Activated T-helper 1 cell treated with anti-CD3 and anti-CD28 coated beads, Interleukin-12 subunit alpha, Interleukin-12 subunit beta, Interleukin-2, Interleukin-4 antibody, amounts not matched to agents 30 ng/mL and 10 ng/mL and 1 ng/mL, durations not matched to agents 14 hours and 24 hours and 36 hours (primary cell): ENCODE measurements at regions of chr5 and their contacts with region 1.

Region 1: DNA sequence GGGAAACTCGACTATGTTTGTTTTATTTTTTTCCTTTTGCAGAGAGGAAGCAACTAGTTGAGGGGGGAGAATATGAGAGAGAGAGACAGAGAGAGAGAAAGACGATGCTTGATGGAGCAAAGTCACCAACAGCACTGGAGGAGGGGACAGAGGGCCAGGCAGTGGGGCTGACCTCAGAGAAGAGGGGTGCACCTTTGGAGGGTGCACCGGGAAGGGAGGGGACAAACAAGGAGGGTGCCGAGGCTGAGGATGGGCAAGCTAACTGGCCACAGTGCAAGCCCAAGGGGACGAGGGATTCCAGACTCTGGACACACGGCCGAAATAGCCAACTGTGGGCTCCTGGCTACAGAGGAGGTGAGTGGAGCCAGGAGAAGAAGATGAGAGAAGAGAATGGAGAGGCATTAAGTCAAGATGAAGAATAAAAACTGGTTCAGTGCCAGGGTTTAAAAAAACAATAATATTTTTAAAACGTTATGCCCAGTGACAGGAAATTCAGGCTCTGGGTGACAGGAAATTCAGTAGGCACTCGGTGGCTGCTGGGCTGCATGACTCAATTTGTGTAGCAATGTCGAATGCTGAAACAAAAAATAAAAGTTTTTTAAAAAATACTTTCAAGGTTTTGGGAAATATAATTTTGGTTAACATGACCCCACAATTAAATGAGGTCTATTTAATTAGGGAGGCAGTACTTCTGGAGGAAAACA is 13.3 kb upstream of the GLRX start:
- DNase-seq: no peak
- H3K4me3 Mint-ChIP-seq: peak overlapping the region; percentile 76
- H3K27ac Mint-ChIP-seq: peak overlapping the region; percentile 54
- H3K4me1 Mint-ChIP-seq: peaks cover 37% of the 10 kb centered on the region
- H3K27me3 Mint-ChIP-seq: peaks cover 2% of the 10 kb centered on the region

Region 2: DNA sequence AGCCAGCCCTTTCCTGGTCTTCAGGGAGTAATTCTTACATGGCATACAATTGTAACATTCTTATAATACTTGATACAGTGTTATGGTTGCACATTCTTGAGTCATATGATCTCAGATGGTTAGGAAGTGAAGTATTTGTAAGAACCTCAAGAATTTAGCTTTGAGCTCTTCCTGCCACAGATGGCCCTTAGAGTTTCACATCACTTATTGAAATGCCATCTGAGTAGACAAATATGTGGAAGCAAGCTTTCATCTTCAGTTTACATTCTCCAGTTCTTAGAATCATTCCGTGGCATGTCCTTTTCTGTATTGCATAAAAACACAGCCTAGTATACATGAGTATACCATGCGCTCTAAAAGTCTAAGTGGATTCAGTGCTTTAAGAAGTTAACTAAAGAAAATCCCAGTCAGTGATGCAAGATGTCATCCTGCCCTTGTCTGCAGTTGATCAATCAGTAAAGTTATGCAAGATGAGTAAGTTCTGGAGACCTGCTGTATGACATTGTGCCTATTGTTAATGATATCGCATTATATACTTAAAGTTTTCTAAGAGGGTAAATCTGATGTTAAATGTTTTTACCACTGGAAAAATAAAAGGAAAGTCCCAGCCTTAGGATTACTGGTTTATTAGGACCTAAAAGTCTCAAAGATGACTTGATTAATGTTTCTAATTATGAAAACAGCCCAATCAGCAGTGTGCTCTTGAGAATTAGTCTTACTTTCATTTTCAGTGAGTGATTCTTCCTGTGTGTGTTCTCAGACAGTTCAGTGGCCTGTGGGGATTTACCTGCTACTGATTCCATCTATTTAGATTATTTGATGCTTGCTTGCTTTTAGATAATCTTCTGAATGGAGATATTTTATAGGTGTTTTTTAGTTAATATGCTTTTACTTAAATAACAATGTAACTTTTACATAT is 75.3 kb before region 1 on chr5:
- intact Hi-C with region 1: loop called (anchors 2 kb)
- DNase-seq: no peak
- H3K4me3 Mint-ChIP-seq: peak overlapping the region; percentile 52
- H3K27ac Mint-ChIP-seq: peak overlapping the region; percentile 45
- H3K4me1 Mint-ChIP-seq: peaks cover 30% of the 10 kb centered on the region
- H3K27me3 Mint-ChIP-seq: peaks cover 22% of the 10 kb centered on the region

Region 3: DNA sequence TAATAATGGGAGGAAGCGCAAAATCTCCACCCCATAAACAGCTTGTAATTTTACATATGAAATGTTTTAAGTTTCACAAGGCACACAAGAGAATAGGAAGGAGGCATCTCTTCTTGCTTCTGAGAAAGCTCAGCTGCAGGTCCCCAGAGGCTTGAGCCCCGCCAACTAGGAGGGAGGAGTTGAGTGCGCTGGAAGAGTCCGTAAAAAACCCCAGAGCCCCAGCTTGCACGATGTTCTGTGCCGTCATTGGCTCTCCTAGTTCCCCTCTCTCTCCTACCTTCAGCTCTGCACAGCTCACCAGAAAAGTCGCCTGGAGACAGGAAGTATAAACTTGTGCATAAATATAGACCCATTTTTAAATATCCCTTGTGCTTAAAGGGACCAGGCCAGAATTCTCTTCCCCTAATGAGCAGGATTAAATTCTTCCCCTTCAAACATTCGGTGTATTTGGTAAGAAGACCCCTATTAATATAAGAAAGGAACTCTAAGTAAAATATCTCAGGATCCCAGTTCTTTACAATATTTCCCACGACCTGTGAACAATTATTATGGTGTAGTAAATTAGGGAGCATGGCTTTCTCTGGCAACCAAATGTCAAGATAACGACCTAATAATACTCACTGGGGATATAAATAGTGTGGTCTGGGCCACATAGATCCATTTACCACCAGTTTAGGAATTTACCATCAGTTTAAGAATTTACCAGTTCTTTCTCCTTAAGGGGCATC is 27.0 kb before region 1 on chr5:
- intact Hi-C with region 1: loop called (anchors 1 kb)
- DNase-seq: peak; percentile 81
- H3K4me3 Mint-ChIP-seq: peak overlapping the region; percentile 72
- H3K27ac Mint-ChIP-seq: peak overlapping the region; percentile 77
- H3K4me1 Mint-ChIP-seq: peaks cover 58% of the 10 kb centered on the region
- H3K27me3 Mint-ChIP-seq: no peaks in the 10 kb centered on the region

Region 4: DNA sequence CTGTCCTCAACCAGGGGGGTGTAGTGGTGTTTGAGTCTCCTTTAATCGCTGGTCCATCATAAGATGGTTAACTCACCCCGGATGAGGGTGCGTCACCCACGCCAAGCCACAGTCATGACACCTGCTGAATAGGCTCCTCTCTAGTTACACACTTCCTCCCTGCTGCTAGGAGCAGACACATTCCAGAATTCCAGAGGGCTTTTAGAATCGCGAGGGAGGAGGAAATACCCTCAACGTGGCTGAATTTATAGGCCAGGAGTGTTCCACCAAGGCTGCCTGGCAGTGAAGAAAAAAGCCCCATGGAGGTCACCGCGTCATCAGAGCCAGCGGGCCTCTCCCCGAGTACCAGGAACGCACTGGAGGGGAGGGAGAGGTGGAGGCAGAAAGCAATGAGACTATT is 18.4 kb before region 1 on chr5:
- intact Hi-C with region 1: loop called (anchors 2 kb)
- DNase-seq: no peak
- H3K4me3 Mint-ChIP-seq: peak overlapping the region; percentile 69
- H3K27ac Mint-ChIP-seq: peak overlapping the region; percentile 67
- H3K4me1 Mint-ChIP-seq: peaks cover 71% of the 10 kb centered on the region
- H3K27me3 Mint-ChIP-seq: no peaks in the 10 kb centered on the region

Region 5: DNA sequence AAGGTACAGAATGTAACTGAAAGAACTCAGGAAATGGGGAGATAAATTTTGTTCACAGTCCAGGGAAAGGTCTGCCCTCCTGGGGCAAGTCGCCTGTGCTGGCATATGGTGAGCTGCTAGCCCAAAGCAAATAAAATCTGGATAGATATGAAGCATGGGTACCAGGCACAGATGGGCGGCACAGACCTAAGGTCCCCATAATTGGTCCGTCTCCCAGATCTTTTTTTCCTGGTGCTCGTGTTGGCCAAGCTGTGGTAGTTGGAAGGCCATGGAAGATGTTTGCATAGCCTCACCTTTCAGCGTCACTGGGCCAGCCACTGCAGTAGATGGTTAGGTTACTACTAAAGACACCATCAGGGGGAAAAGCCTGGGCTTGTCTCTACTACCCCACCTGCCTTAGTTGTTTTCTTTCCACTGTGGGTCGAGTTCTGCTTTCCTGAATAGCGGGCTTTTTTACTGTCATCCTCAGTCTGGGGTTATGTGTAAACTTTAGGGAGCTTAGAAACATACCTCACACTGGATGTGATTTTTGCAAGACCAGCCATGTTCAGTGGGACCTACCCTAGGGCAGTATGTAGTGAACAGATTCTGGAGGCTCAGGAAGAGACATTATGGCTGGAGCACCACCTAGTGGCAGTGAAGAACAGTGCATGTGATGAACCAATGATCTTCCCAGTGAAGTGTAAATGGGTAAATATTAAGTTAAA is 10.9 kb after region 1 on chr5:
- intact Hi-C with region 1: loop called (anchors 1 kb)
- DNase-seq: peak; percentile 44
- H3K4me3 Mint-ChIP-seq: no peak overlapping the region
- H3K27ac Mint-ChIP-seq: no peak overlapping the region
- H3K4me1 Mint-ChIP-seq: peaks cover 37% of the 10 kb centered on the region
- H3K27me3 Mint-ChIP-seq: peaks cover 12% of the 10 kb centered on the region